Activated CD8-positive, alpha-beta T cell treated with anti-CD3 and anti-CD28 coated beads, Interleukin-2, amount 10 ng/mL, durations not matched to agents 7 days and 5 days (primary cell): ENCODE measurements at regions of chrX and their contacts with region 1.

Region 1: GRCh38 chrX:72100824-72101351 is 30.8 kb downstream of the RTL5 start:
- DNase-seq: peak; percentile 86
- ATAC-seq: peak; percentile 77
- H3K4me3 Mint-ChIP-seq: peak overlapping the region; percentile 46
- H3K27ac Mint-ChIP-seq: peak overlapping the region; percentile 49
- H3K4me1 Mint-ChIP-seq: peaks cover 45% of the 10 kb centered on the region
- H3K27me3 Mint-ChIP-seq: peaks cover 51% of the 10 kb centered on the region

Region 2: DNA sequence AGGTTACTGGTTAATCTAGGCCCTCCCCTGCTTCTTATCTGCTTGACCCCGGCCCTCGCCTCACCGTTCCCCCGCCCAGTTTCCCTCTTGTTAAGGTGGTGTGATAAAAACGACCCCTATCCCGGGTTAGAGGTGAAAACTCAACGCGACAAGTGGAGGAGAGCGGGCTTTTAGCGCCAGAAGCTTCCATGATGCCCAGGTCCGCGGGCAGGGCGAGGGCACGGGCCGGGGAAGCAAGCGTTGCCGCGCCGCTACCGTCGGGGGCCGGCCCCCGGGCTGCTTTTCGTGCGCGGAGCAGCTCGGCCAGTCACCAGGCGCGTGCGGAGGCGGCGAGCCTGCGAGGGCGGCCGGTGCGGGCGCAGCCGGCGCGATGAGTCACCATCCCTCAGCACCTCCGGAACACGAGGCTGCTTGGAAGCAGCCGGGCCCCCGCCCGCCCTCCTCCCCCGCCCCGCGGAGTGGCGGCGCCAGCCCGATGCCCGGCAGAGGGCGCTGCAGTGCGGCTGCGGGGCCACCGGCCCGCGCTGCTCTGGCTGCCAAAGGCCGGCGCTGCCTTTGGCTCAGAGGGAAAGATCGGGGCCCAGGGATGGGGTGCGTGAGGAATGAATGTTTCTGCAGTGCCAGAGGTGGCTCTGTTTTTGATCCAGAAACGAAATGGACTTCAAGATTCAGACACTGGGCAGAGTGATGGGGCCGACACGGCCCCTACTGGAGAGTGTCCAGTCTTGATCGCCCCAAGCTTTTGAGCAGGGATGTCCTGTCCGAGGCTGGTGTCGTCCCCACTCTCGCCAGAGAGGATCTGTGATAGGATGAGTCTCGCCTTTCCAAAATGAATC is 82.4 kb before region 1 on chrX:
- CTCF ChIA-PET with region 1: interaction called, 10 read pairs
- POLR2A ChIA-PET with region 1: no interaction called
- DNase-seq: peak; percentile 80
- ATAC-seq: peak; percentile 99
- H3K4me3 Mint-ChIP-seq: no peak overlapping the region
- H3K27ac Mint-ChIP-seq: no peak overlapping the region
- H3K4me1 Mint-ChIP-seq: peaks cover 6% of the 10 kb centered on the region
- H3K27me3 Mint-ChIP-seq: peaks cover 48% of the 10 kb centered on the region